Lower lobe of right lung (tissue), 2 donors: ENCODE measurements at regions of chr4 and their contacts with region 1.

Region 1: DNA sequence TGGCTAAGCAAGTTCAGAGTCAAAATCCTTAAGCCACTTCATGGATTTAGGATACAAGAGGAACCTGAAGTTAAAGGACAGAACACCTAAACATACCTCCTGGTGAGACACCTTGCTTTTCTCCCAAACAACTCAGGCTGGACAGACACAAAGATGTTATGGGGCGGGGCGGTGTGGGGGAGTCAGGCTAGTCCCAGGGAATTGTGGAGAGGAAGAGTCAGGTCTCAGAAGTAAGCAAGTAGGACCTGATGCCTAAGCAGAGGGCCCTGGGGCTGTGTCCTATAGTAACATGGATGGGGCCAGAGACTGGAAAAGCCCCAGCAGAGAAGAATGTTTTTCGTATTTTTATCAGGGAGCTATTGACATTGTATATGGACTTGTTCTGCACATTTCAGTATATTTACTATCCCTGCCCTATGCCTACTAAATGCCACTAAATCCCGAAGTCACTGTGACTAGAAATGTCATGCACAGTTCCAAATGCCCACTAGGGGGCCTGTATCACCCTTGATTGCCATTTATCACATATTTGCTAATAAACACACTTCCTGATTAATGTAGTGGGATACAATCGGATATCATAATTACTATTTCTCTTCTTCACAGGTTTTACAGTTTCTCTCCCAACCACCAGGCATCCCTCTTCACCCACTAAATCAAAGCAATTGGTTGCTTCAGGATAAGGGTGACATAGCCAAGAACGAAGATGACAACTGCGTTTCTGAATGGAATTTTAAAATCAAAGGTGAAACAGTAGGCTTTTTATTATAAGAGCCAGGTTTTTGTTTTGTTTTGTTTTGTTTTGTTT is 23.8 kb upstream of the ARHGAP10 start:
- DNase-seq: no peak
- ATAC-seq: peak; percentile 81 to 83
- H3K4me3 ChIP-seq: no peak overlapping the region
- H3K27ac ChIP-seq: no peak overlapping the region
- H3K4me1 ChIP-seq: no peaks in the 10 kb centered on the region
- H3K27me3 ChIP-seq: no peaks in the 10 kb centered on the region
- CTCF ChIP-seq: peak; percentile 86

Region 2: DNA sequence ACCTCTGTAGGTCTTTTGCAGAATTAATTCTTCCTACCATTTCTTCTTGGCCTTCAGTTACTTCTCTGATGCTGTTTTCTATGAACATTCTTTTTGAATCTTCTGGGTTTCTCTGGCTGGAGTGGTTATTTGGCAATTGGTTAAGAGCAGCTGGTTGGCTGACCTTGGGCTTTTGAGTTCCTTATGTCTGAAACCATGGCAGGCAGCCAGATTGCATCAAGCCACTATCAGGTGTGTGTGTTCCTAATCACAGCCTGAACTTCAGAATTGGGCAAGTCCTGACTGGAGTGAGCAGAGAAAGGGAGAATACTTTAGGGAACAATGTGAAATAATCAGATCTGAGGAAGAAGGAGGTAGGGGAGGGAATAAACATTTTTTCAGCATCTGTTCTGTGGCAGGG is 114.1 kb after region 1 on chr4:
- intact Hi-C with region 1: no loop called
- DNase-seq: peak; percentile 86
- ATAC-seq: peak; percentile 78 to 85
- H3K4me3 ChIP-seq: no peak overlapping the region
- H3K27ac ChIP-seq: no peak overlapping the region
- H3K4me1 ChIP-seq: peaks cover 29% of the 10 kb centered on the region
- H3K27me3 ChIP-seq: no peaks in the 10 kb centered on the region
- CTCF ChIP-seq: no peak

Region 3: GRCh38 chr4:147866532-147867271 is 158.6 kb after region 1 on chr4:
- intact Hi-C with region 1: loop called (anchors 5 kb)
- DNase-seq: peak; percentile 88
- ATAC-seq: peak; percentile 95 to 96
- H3K4me3 ChIP-seq: no peak overlapping the region
- H3K27ac ChIP-seq: no peak overlapping the region
- H3K4me1 ChIP-seq: no peaks in the 10 kb centered on the region
- H3K27me3 ChIP-seq: no peaks in the 10 kb centered on the region
- CTCF ChIP-seq: peak; percentile 99

Region 4: GRCh38 chr4:148425327-148426110 is 717.5 kb after region 1 on chr4:
- intact Hi-C with region 1: no loop called
- DNase-seq: no peak
- ATAC-seq: no peak
- H3K4me3 ChIP-seq: no peak overlapping the region
- H3K27ac ChIP-seq: no peak overlapping the region
- H3K4me1 ChIP-seq: peaks cover 2% of the 10 kb centered on the region
- H3K27me3 ChIP-seq: no peaks in the 10 kb centered on the region
- CTCF ChIP-seq: no peak